Uterus (tissue), 4 donors: ENCODE measurements at regions of chr9 and their contacts with region 1.

Region 1: DNA sequence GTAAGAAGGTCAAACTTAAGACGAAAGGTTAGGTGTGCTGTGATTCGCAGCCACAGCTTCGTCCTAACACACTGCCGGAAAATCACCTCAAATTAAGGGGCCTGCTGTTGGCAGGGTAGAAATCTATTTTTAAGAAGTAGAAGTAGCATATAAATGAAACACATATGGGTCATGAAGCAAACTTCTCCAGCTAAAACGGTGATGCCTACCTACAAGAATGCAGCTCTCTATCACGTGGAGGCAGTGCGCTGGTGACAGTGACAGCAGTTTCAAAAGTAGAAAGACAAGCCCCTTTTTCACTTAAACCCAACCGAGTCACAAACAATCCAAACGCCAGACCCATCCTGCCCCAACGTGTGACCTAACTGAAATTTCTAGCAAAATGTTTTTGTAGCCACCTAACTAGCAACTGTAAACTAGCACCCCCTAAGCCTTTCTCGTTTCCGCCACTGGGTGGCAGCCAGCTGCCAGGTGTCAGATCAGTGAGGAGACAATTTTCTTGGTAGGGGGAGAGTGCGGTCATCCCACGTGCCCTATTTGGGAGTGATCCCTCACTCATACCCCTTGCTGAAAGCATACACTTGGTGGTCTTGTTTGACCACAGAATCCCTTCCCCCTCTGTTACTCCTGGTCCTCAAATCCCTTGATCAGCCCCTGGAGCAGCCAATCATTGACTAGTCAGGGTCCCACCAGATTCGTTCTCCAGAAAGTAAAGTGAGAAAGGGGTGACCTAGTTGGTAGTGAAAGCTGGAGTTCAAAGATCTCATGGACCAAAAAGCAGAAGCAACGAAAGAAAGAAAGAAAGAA is 71.8 kb upstream of the MAMDC2 start:
- DNase-seq: peak; percentile 83 to 85
- H3K4me3 ChIP-seq: no peak overlapping the region
- H3K27ac ChIP-seq: peak overlapping the region; percentile 42 to 43
- H3K4me1 ChIP-seq: no peaks in the 10 kb centered on the region
- H3K27me3 ChIP-seq: no peaks in the 10 kb centered on the region
- CTCF ChIP-seq: peak; percentile 81 to 90 (median 89)
- POLR2A ChIP-seq: no peak

Region 2: GRCh38 chr9:70111042-70111602 is 139.3 kb after region 1 on chr9:
- intact Hi-C with region 1: loop called (anchors 5 kb)
- DNase-seq: peak; percentile 85 to 87
- H3K4me3 ChIP-seq: no peak overlapping the region
- H3K27ac ChIP-seq: peak overlapping the region; percentile 51 to 72
- H3K4me1 ChIP-seq: peaks cover 0 to 9% of the 10 kb centered on the region in 2 donors
- H3K27me3 ChIP-seq: no peaks in the 10 kb centered on the region
- CTCF ChIP-seq: peak; percentile 79 to 86 (median 80)
- POLR2A ChIP-seq: no peak

Region 3: GRCh38 chr9:70121818-70122436 is 150.1 kb after region 1 on chr9:
- intact Hi-C with region 1: no loop called
- DNase-seq: no peak
- H3K4me3 ChIP-seq: no peak overlapping the region
- H3K27ac ChIP-seq: no peak overlapping the region
- H3K4me1 ChIP-seq: no peaks in the 10 kb centered on the region
- H3K27me3 ChIP-seq: no peaks in the 10 kb centered on the region
- CTCF ChIP-seq: no peak
- POLR2A ChIP-seq: no peak